Activated T-helper 1 cell treated with anti-CD3 and anti-CD28 coated beads, Interleukin-12 subunit alpha, Interleukin-12 subunit beta, Interleukin-2, Interleukin-4 antibody, amounts not matched to agents 30 ng/mL and 10 ng/mL and 1 ng/mL, durations not matched to agents 14 hours and 24 hours and 36 hours (primary cell): ENCODE measurements at regions of chr12 and their contacts with region 1.

Region 1: GRCh38 chr12:9741726-9742125 is 8.8 kb upstream of the CLECL1 start:
- DNase-seq: peak; percentile 81
- H3K4me3 Mint-ChIP-seq: peak overlapping the region; percentile 70
- H3K27ac Mint-ChIP-seq: peak overlapping the region; percentile 86
- H3K4me1 Mint-ChIP-seq: peaks cover 72% of the 10 kb centered on the region
- H3K27me3 Mint-ChIP-seq: no peaks in the 10 kb centered on the region

Region 2: DNA sequence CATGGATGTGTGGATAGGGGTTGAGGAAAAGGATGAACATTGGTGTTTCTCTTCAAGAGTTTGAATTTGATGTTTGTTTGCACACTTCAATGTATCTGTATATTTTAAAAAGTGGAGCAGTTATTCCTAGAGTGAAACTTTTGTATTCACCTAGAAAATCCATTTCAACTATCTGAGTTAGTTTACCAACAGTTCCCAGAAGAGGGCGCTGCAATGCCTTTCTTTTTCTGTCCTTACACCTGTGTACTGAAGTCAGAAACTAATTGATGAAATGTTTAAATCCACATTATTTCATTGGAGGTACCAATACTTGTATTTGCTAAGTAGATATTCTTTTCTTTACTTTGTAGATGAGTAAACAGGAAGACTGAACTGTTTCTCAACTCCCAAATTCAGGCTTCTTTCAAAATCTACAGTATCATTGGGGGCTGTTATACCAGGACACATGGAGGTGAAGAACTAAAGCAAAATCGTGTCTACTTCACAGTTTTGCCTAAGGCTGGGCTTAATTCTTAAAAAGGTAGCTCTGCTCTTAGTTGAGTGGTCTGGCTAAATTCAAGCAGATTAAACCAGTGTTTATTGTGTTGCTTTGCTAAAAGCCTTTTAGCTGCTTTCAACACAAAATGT is 107.4 kb before region 1 on chr12:
- intact Hi-C with region 1: loop called (anchors 1 kb)
- DNase-seq: peak; percentile 64
- H3K4me3 Mint-ChIP-seq: peak overlapping the region; percentile 60
- H3K27ac Mint-ChIP-seq: peak overlapping the region; percentile 63
- H3K4me1 Mint-ChIP-seq: peaks cover 60% of the 10 kb centered on the region
- H3K27me3 Mint-ChIP-seq: peaks cover 3% of the 10 kb centered on the region

Region 3: DNA sequence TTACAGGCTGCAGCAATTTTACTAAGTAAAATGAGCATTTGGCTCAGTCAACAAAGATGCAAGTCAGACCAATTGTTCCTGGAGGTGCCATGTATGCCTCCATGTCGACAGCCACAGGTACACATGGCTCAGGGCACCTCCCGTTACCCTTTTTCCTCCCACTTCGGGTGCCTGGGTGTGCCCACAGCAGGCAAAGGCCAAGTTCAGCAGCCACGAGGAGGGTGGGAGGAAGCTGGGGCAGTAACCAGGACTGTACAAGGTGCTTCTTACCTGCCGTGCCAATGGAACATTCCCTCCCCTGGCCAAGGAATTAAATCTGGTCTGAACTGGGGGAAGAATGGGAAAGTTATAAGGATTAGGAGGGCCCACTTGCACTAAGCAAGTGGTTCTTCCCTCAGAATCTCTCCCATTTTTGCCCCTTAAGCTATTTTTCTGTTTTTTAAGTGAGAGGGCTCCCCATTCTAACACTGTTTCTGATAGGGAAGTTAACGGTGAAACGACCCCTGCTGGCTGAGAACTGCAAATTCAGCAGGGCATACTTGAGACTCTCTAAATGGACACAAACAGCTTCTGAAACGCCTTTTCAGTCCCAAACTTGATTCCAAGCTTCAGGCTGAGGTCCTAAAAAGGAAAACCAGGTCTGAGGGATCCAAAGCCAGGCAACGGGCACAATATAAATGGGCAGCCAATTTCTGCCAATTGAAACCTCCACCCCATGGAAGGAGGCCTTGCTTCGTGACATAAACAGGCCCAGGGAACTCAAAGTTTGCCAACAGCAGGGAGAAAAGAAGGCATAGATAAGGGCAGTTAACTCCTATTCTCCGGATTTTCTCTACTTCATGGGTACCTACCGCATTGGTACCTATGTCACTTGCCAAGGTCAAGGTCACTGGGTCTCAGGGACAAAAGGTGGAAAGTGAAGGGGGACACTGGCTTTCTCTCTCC is 33.6 kb before region 1 on chr12:
- intact Hi-C with region 1: loop called (anchors 1 kb)
- DNase-seq: peak; percentile 48
- H3K4me3 Mint-ChIP-seq: peak overlapping the region; percentile 57
- H3K27ac Mint-ChIP-seq: peak overlapping the region; percentile 90
- H3K4me1 Mint-ChIP-seq: peaks cover 56% of the 10 kb centered on the region
- H3K27me3 Mint-ChIP-seq: no peaks in the 10 kb centered on the region

Region 4: DNA sequence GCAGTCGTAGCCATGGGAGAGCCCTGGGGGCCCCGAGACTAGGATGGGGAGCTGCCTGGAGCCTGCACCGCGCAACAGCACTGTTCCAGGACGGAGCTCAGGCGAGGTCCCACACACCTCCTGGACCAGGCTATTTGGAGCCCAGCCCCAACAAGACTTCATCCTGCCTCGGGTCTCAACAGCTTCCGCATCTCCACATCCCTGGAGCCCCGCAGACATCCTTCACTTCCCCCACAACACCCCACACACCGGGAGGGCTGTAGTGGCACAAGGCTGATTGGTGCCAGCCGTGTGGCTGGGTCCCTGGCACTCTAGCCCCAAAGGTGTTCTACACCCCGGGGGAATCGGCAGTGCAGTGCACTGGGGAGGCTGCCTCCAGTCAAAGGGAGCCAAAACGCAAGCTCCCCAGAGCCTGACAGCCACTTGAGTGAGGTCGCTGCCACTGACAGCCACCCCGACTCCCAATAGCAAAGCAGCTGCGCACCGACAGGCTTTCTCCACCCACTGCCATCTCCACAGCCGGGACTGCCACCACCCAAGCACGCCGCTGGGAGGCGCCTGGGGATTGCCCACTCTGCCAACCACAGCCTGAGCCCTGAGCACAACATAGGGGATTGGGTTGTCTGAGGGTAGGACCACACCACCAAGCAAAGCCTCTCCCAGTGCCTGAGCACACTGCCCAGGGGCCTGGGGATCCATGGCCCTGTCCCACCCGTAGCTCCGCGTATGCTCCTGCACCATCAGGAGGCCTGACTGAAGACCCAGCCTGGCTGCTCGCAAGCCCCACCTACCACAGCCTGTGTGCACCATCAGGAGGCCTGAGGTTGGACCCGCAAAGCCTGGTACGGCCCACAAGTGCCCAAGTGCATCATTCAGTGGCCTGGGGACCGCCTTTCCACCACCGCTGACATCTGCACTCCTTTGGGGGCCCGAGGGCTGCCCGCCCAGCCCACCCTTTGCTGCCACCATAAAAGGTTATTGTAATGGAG is 72.4 kb after region 1 on chr12:
- intact Hi-C with region 1: loop called (anchors 1 kb)
- DNase-seq: peak; percentile 90
- H3K4me3 Mint-ChIP-seq: peak overlapping the region; percentile 87
- H3K27ac Mint-ChIP-seq: peak overlapping the region; percentile 61
- H3K4me1 Mint-ChIP-seq: peaks cover 35% of the 10 kb centered on the region
- H3K27me3 Mint-ChIP-seq: peaks cover 21% of the 10 kb centered on the region